ENCODE measurements at regions of chr11 and their contacts with region 1.

Region 1: GRCh38 chr11:112074026-112074811 is at the start of gene NKAPD1:
- DNase-seq: peak; percentile 92
- ATAC-seq: peak; percentile 90
- H3K4me3 ChIP-seq: peak within 1 kb of the TSS; percentile 93
- H3K27ac ChIP-seq: peak within 1 kb of the TSS; percentile 89
- H3K4me1 ChIP-seq: peaks cover 16% of the 10 kb centered on the region
- H3K27me3 ChIP-seq: no peaks in the 10 kb centered on the region
- CTCF ChIP-seq: no peak
- total RNA-seq, gene NKAPD1: 19.4 and 34.3 TPM in 2 replicates

Region 2: GRCh38 chr11:111949519-111950426 is 124.4 kb before region 1 on chr11:
- CTCF ChIA-PET with region 1: no interaction called
- POLR2A ChIA-PET with region 1: no interaction called
- intact Hi-C with region 1: no loop called
- DNase-seq: no peak
- ATAC-seq: no peak
- H3K4me3 ChIP-seq: no peak overlapping the region
- H3K27ac ChIP-seq: no peak overlapping the region
- H3K4me1 ChIP-seq: no peaks in the 10 kb centered on the region; the same call in 1 of the 2 replicates
- H3K27me3 ChIP-seq: no peaks in the 10 kb centered on the region
- CTCF ChIP-seq: no peak

Region 3: GRCh38 chr11:112050721-112051120 is 23.5 kb before region 1 on chr11:
- CTCF ChIA-PET with region 1: no interaction called
- POLR2A ChIA-PET with region 1: interaction called, 15 read pairs
- intact Hi-C with region 1: no loop called
- DNase-seq: no peak
- ATAC-seq: no peak
- H3K4me3 ChIP-seq: no peak overlapping the region
- H3K27ac ChIP-seq: no peak overlapping the region
- H3K4me1 ChIP-seq: 0 out of 2 replicates have a peak, but pooled peaks cover 4% of the 10 kb centered on the region
- H3K27me3 ChIP-seq: no peaks in the 10 kb centered on the region
- CTCF ChIP-seq: no peak